Lower leg skin (tissue), 4 donors: ENCODE measurements at regions of chr1 and their contacts with region 1.

Region 1: DNA sequence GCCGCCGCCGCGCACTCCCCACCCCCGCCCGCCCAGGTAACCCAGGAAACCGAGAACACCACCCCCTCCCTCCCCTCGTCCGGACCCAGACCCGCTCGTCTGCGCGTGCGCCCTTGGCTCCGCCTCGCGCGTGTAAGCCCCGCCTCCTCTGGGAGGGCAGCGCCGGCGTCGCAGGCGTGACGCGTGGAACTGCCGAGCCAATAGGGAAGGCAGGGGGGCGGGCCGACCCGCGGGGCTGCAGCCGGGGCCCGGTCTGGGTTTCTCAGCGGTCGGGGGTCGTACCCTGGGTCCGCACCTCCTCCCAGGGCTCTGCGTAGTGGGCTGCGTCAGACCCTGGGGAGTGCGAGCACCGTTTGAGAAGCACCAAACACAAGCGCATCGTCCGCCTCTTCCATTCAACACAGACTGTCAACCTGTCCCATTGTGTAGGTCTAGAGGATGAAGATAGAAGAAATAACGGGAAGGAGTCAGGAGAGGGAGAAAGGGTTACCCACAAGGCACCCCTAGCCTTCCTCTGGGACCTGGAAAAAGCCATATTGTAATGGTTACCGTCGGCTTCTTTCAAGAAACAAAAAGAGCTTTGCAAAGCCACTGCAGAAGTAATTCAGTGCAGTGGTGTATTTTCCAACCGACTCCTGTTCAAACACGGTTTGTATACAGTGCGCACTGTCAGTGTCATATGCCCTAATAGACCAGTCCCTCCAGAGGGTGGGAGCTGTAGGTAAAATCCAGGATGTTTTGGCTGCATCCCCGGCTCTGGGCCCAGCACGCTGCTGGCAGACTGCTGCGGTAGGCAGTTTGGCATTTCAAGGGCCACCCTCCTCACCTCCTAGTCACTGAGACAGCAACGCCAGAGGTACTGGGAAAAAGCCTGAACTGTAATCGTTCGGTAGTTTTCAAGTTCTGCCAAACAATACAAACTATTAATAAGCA is 473 bp upstream of the LYST start:
- DNase-seq: peak; percentile 93 to 99
- H3K4me3 ChIP-seq: peak overlapping the region; percentile 67
- CTCF ChIP-seq: no peak
- POLR2A ChIP-seq: no peak

Region 2: DNA sequence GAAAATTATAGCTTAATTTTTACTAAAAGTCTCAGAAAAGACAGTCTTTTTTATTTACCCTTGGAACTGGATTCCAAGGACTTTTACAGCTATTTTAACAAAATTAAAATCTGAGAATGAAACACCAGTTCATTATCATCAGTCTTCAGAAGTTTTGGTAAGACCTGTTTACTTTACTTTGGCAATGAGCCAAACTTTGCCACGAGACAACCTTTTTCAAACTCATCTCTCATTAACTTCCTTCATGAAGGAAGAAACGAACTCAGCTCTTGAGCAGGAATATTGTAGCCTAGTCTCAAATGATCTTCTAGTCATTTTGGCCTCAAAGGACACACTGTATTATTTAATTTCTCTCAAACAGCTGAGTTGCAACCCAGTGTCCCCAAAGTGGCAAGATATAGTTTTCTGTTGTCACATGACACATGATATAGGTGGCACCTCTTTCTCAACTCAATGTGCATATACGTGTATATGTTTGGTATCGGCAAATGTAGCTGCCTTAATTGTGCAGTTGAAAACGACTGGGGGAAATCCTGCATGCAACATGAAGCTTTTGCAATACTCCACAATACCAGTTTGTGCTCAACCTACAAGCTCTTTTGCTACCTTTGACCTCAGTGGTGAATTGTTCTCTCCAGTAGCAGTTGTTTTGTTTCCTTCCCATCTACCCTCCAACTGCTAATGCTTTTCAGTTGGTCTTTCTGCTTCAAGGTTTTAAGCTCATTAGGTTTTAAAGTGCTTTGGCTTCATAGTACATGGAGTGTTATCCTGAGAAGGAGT is 209.2 kb before region 1 on chr1:
- intact Hi-C with region 1: no loop called
- DNase-seq: no peak
- H3K4me3 ChIP-seq: no peak overlapping the region
- CTCF ChIP-seq: no peak
- POLR2A ChIP-seq: no peak

Region 3: GRCh38 chr1:235831148-235831547 is 36.0 kb before region 1 on chr1:
- intact Hi-C with region 1: no loop called
- DNase-seq: no peak
- H3K4me3 ChIP-seq: no peak overlapping the region
- CTCF ChIP-seq: no peak
- POLR2A ChIP-seq: no peak

Region 4: DNA sequence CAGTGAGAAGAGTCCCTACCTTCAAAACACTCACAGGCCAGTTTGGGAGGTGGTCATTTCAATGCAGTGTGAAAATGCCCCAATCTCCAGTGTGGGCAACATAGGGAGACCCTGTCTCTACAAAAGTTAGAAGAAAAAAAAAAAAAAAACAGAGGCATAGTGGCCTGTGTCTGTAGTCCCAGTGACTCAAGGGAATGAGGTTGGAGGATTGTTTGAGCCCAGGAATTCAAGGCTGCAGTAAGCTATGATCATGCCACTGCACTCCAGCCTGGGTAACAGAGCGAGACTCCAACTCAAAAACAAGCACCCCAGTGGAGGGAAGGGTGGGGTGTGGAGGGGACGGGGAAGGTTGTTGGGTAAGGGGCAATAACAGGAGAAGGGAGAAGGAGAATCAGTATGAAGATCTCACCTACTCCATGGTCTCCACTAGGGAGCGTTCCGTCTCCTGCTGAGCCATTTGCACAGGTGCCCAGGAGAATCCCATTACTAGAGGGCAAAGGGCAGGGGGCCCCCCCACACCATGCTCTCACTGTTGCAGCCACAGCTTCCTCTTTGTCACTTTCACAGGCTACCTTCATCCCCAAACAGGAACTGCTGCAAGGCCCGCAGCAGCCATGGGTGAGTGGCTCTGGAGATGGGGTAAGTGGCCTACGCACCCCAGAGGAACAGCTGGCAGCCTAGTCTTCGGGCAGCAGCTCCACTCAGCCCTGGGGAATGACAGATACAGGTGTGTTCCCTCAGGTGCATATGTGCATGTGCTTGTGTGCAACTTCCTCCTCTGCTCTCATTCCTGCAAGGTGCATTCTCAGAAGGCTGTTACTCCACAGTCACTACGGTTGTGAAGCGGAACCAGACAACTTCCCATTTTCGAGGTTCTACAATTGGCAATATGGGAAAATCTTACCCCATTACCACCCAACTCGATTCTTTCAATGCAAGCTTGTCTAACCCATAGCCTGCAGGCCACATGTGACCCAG is 87.4 kb after region 1 on chr1:
- intact Hi-C with region 1: loop called (anchors 10 kb)
- DNase-seq: no peak
- H3K4me3 ChIP-seq: no peak overlapping the region
- CTCF ChIP-seq: no peak
- POLR2A ChIP-seq: no peak

Region 5: GRCh38 chr1:235971571-235972310 is 104.6 kb after region 1 on chr1:
- intact Hi-C with region 1: loop called (anchors 5 kb)
- DNase-seq: peak; percentile 96 to 98
- H3K4me3 ChIP-seq: no peak overlapping the region
- CTCF ChIP-seq: peak in 1 of 3 donors; percentile 80
- POLR2A ChIP-seq: peak in 1 of 2 donors; percentile 12

Region 6: GRCh38 chr1:236066828-236067386 is 199.7 kb after region 1 on chr1:
- intact Hi-C with region 1: no loop called
- DNase-seq: peak; percentile 67 to 91
- H3K4me3 ChIP-seq: no peak overlapping the region
- CTCF ChIP-seq: no peak
- POLR2A ChIP-seq: no peak

Region 7: GRCh38 chr1:236089046-236089773 is 222.0 kb after region 1 on chr1:
- intact Hi-C with region 1: no loop called
- DNase-seq: no peak
- H3K4me3 ChIP-seq: no peak overlapping the region
- CTCF ChIP-seq: no peak
- POLR2A ChIP-seq: no peak